ENCODE measurements at regions of chr2 and their contacts with region 1.

Region 1: GRCh38 chr2:57906152-57906732 is 140.4 kb upstream of the VRK2 start:
- DNase-seq: no peak
- ATAC-seq: peak; percentile 58
- H3K4me3 Mint-ChIP-seq: no peak overlapping the region
- H3K27ac Mint-ChIP-seq: peak overlapping the region; percentile 4
- H3K4me1 Mint-ChIP-seq: peaks cover 34% of the 10 kb centered on the region
- H3K27me3 Mint-ChIP-seq: no peaks in the 10 kb centered on the region
- CTCF ChIP-seq: peak; percentile 42

Region 2: GRCh38 chr2:57536535-57537231 is 369.6 kb before region 1 on chr2:
- CTCF ChIA-PET with region 1: no interaction called
- POLR2A ChIA-PET with region 1: no interaction called
- intact Hi-C with region 1: no loop called
- DNase-seq: no peak
- ATAC-seq: no peak
- H3K4me3 Mint-ChIP-seq: no peak overlapping the region
- H3K27ac Mint-ChIP-seq: no peak overlapping the region
- H3K4me1 Mint-ChIP-seq: no peaks in the 10 kb centered on the region
- H3K27me3 Mint-ChIP-seq: no peaks in the 10 kb centered on the region
- CTCF ChIP-seq: no peak

Region 3: GRCh38 chr2:57962861-57963260 is 56.6 kb after region 1 on chr2:
- CTCF ChIA-PET with region 1: no interaction called
- POLR2A ChIA-PET with region 1: no interaction called
- intact Hi-C with region 1: loop called (anchors 5 kb)
- DNase-seq: no peak
- ATAC-seq: peak; percentile 42
- H3K4me3 Mint-ChIP-seq: no peak overlapping the region
- H3K27ac Mint-ChIP-seq: no peak overlapping the region
- H3K4me1 Mint-ChIP-seq: peaks cover 8% of the 10 kb centered on the region
- H3K27me3 Mint-ChIP-seq: no peaks in the 10 kb centered on the region
- CTCF ChIP-seq: no peak

Region 4: GRCh38 chr2:58010599-58010998 is 104.4 kb after region 1 on chr2:
- CTCF ChIA-PET with region 1: no interaction called
- POLR2A ChIA-PET with region 1: no interaction called
- intact Hi-C with region 1: no loop called
- DNase-seq: no peak
- ATAC-seq: no peak
- H3K4me3 Mint-ChIP-seq: no peak overlapping the region
- H3K27ac Mint-ChIP-seq: no peak overlapping the region
- H3K4me1 Mint-ChIP-seq: peaks cover 9% of the 10 kb centered on the region
- H3K27me3 Mint-ChIP-seq: no peaks in the 10 kb centered on the region
- CTCF ChIP-seq: no peak

Region 5: DNA sequence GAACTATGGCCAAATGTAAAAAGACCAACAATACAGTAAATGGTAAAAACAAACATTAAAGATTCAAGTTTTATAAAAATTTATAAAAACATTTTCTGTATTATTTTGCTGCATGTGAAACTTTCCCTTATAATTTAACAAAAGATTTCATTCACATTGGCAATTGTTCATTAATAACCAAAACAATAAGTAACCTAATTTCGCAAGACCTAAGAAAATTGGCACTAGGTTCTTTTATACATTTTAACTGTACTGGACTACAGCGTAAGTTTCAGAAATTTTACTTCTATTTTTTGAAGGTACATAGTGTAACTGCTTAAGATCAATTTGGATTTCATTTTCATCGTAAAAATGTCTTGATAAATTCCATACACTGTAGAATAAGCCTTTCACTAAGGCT is 257.7 kb after region 1 on chr2:
- CTCF ChIA-PET with region 1: interaction called, 3 read pairs
- POLR2A ChIA-PET with region 1: no interaction called
- intact Hi-C with region 1: loop called (anchors 1 kb)
- DNase-seq: no peak
- ATAC-seq: no peak
- H3K4me3 Mint-ChIP-seq: no peak overlapping the region
- H3K27ac Mint-ChIP-seq: no peak overlapping the region
- H3K4me1 Mint-ChIP-seq: no peaks in the 10 kb centered on the region
- H3K27me3 Mint-ChIP-seq: no peaks in the 10 kb centered on the region
- CTCF ChIP-seq: no peak

Region 6: GRCh38 chr2:58448065-58448507 is 541.8 kb after region 1 on chr2:
- CTCF ChIA-PET with region 1: interaction called, 10 read pairs
- POLR2A ChIA-PET with region 1: no interaction called
- intact Hi-C with region 1: loop called (anchors 1 kb)
- DNase-seq: no peak
- ATAC-seq: no peak
- H3K4me3 Mint-ChIP-seq: no peak overlapping the region
- H3K27ac Mint-ChIP-seq: no peak overlapping the region
- H3K4me1 Mint-ChIP-seq: peaks cover 3% of the 10 kb centered on the region
- H3K27me3 Mint-ChIP-seq: no peaks in the 10 kb centered on the region
- CTCF ChIP-seq: no peak

Region 7: DNA sequence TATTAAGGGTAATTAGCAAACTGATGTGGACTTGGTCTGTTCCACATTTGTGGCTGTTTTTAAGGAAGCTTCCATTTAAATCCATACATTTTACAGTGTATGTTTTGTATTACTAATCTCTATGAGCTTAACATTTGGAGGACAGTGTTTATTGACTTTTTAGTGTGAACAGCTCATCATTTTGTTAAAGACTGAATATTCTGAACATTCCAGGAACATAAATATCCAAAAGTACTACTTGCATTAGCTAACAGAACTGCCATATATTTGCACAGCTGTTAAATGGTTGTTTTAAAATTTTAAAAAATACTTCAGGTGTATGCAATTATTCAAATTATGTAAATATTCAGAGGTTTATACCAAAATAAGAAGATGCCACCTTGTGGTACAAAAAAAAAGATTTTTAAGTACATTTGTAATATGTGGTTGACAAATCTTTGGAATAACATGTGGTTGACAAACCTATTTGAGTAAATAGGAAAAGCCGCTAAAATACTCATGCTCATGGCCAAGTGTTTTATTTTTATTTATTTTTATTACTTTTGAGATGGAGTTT is 774.6 kb after region 1 on chr2:
- CTCF ChIA-PET with region 1: no interaction called
- POLR2A ChIA-PET with region 1: no interaction called
- intact Hi-C with region 1: loop called (anchors 2 kb)
- DNase-seq: no peak
- ATAC-seq: no peak
- H3K4me3 Mint-ChIP-seq: no peak overlapping the region
- H3K27ac Mint-ChIP-seq: no peak overlapping the region
- H3K4me1 Mint-ChIP-seq: no peaks in the 10 kb centered on the region
- H3K27me3 Mint-ChIP-seq: no peaks in the 10 kb centered on the region
- CTCF ChIP-seq: no peak

Region 8: DNA sequence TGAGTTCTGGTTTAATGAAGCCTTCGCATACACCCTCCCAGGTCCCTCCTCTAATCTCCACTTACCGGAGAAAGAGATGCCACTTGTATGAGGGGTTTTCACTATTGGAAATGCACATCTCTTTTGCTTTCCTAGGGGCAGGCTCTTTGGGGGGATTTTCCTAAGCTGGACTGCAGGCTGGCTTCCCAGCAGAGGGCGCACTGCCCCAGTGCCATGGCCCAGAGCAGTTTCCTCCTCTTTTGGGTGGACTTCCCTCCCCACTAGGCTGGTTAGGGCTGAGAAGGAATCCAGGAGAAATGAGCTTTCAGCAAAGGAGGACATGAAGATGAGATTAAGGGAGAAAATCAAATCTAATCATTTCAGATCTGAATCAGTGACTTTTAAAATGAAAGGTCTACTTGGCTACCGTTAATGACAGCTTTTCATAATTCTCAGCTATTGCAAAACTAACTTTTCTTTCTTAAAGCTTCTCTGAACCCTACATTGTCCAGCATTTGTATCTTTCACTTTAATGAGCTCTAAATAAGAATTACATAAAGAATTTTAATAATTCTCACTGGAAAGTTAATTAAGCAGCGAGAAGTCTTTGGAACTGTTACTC is 1119.0 kb after region 1 on chr2:
- CTCF ChIA-PET with region 1: interaction called, 7 read pairs
- POLR2A ChIA-PET with region 1: no interaction called
- intact Hi-C with region 1: loop called (anchors 10 kb)
- DNase-seq: peak; percentile 50
- ATAC-seq: peak; percentile 54
- H3K4me3 Mint-ChIP-seq: no peak overlapping the region
- H3K27ac Mint-ChIP-seq: no peak overlapping the region
- H3K4me1 Mint-ChIP-seq: peaks cover 2% of the 10 kb centered on the region
- H3K27me3 Mint-ChIP-seq: peaks cover 10% of the 10 kb centered on the region
- CTCF ChIP-seq: peak; percentile 45

Measured in activated B cell treated with CpG ODN at 0.5 μM for 24 hours (primary cell).